GM18951 (cell line): ENCODE measurements at regions of chr1 and their contacts with region 1.

Region 1: GRCh38 chr1:211476200-211476849 is 15.6 kb downstream of the RD3 start:
- POLR2A ChIP-seq: no peak

Region 2: DNA sequence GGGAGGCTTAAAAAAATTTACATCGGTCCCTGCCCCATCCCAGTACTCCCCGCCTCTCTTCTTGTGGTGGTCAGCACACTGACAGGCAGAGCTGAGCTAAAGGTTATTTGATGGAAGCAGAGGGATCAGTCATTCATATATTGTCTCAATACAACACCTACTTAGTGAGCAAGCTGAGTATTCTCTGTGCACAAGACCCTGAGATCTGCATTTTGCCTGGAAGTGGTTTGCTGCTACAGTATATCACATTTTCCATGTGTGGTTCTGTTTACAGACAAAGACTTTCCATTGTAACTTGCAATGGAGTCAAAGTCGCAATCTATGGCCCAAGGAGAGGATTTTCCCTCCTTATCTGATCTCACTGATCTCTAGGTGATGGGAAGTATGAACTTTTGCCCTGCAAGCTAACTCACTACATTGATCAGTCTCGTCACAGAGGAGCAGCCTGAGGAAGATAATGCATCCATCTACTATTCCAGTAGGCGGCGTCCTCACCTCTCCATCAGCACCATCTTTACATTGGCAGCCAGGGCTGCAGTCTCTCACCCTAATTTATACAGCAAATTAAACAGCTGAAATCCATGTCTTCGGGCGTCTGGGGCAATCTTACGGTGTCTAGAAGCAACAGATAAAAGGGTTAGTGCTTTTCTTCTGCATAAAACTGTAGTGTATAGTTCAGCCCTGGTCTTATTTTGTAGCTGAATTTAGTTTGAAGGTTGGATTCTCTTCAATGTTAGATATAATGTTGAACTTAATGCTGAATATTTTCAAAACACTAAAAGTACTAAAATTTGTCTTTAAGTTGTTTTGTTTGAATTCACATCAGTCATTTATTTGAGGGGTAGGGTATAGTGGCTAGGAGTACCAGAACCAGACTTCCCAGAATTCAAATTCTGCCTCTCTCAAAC is 152.9 kb before region 1 on chr1:
- in situ Hi-C with region 1: loop called (anchors 10 kb)
- POLR2A ChIP-seq: no peak

Region 3: DNA sequence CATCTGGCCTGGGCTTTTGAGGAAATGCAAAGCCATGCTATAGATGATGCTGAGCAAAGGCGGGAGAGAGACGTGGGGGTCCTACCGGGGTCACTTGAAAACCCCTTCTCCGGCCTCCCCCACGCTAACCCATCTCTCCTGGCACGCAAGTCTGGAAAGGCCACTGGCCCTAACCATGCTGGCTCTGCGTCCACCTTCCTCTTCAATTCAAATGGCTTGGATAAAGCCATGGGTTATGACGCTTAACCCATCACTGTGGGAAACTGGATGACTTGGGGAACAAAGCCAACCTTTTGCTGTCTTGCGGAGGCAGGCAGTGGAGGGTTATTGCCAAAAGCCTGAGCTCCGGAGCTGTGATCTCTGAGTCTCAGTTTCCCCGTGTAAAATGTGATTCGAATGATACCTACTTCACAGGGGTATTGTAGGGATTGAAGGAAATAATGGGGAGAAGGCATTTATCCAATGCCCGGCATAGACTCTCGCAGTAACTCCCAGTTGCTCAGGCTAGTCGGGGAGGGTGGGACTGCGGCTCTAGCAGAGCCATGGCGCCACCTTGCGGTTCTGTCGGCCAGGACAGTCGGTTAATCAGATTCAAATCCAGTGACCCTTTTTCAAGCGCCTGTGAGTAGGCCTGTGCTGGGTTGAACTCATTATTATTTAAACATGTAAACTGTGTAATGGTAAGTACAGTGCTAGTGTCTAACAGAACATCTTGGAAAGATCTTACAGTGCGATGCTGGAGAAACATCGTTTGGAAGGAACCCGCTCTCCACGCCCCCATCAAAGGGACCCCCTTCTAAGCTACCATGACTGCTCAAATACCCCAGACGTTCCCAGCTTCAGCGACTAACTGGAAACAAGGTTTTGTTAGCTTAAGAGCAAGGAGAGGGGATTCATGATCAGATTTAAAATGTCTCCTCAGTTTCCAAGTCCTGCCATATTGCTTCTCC is 178.8 kb after region 1 on chr1:
- in situ Hi-C with region 1: loop called (anchors 10 kb)
- POLR2A ChIP-seq: no peak